Activated naive CD4-positive, alpha-beta T cell treated with anti-CD3 and anti-CD28 coated beads for 36 hours (primary cell): ENCODE measurements at regions of chr16 and their contacts with region 1.

Region 1: GRCh38 chr16:28291873-28292660 is at the start of gene SBK1:
- DNase-seq: peak; percentile 78
- H3K4me3 Mint-ChIP-seq: peak within 1 kb of the TSS; percentile 87
- H3K27ac Mint-ChIP-seq: peak within 1 kb of the TSS; percentile 83
- H3K4me1 Mint-ChIP-seq: peaks cover 49% of the 10 kb centered on the region
- H3K27me3 Mint-ChIP-seq: no peaks in the 10 kb centered on the region
- total RNA-seq, gene SBK1: 2.8 to 3.4 TPM

Region 2: GRCh38 chr16:27993587-27993986 is 298.5 kb before region 1 on chr16:
- CTCF ChIA-PET with region 1: no interaction called
- intact Hi-C with region 1: no loop called
- DNase-seq: no peak
- H3K4me3 Mint-ChIP-seq: no peak overlapping the region
- H3K27ac Mint-ChIP-seq: no peak overlapping the region
- H3K4me1 Mint-ChIP-seq: peaks cover 11% of the 10 kb centered on the region
- H3K27me3 Mint-ChIP-seq: no peaks in the 10 kb centered on the region

Region 3: DNA sequence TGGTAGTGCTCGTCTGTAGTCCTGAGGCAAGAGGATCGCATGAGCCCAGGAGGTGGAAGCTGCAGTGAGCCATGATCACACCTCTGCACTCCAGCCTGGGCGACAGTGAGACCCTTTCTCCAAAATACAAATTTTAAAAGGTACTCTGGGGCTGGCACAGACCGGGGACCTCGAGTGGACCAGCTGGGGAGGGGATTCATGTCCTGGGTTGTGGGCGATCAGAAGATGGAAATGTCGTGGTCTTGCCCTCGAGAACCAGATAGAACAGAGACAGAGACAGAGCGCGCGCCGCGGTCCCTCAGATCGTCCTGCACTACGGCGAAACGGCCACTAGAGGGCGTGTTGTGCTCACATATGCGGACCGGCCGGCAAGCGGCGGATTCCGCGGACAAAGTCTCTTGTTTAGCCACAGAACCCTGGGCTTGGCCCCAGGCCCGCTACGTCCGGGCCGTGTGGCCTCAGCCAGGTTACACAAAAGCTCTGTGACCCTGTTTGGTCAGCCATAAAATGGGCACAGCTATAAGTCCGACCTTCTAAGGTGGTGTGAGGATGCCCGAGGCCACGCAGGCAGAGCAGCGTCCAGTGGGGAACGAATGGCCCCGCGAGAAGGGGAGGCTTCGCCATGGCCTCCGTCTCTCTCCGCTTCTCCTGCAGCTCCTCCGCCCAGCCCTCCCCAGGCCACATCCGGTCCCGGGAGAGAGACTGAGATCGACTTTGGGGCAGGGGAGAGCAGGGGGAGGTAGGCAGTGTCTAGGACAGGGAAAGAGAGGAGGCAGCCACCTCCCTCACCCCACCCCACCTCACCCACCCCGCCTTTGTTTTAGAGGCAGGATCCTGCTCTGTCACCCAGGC is 14.3 kb before region 1 on chr16:
- CTCF ChIA-PET with region 1: interaction called, 10 read pairs
- intact Hi-C with region 1: loop called (anchors 2 kb)
- DNase-seq: peak; percentile 88
- H3K4me3 Mint-ChIP-seq: peak overlapping the region; percentile 66
- H3K27ac Mint-ChIP-seq: no peak overlapping the region
- H3K4me1 Mint-ChIP-seq: peaks cover 31% of the 10 kb centered on the region
- H3K27me3 Mint-ChIP-seq: no peaks in the 10 kb centered on the region